ENCODE measurements at regions of chr7 and their contacts with region 1.

Region 1: DNA sequence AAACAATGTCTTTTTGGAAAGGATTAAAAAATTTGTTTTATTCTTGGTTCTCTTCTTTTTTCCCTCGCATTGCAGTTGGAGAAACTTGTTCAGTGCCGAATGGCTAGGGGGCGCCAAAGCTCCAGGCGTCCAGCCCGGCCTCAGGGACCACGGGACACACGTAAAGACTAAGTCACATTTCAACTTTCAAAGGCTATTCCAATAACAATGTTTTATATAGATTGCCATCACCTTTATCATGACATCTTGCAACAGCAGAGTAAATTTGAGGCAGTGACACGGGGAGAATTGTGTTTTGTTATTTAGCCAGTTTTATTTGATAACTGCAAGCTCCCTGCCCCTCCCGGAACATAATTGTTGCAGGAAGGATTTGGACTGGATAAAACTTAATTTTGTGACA is 2.2 kb upstream of the IGFBP3 start:
- DNase-seq: peak; percentile 85

Region 2: DNA sequence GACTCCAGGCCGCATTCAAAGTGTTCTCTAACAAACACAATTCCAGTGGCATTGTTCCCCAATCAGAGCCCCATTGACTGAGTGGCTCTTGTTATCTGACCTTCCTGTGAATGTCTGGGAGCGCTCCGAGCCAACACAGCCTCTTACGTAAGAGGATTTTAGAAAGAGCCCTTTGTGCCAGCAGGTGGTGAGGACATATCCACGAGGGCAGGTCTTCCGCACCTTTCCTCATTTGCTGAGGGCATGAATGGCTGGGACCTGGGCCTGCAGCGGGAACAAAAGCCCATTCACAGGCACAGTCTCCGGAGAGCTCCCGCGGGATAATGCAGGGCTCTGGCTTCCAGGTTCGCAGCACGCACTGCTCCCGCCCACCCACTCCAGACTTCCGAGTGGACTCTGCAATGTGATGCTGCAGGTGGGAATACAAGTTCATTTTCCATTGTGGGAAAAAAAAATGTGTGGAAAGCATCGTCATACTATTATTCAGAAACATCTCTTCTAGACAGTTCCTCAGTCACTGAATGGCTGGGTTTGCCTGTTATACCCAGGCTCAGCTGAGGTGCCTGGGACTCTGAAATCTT is 292.8 kb after region 1 on chr7:
- intact Hi-C with region 1: loop called (anchors 10 kb)
- DNase-seq: no peak

Region 3: GRCh38 chr7:46603780-46604179 is 680.5 kb after region 1 on chr7:
- intact Hi-C with region 1: loop called (anchors 10 kb)
- DNase-seq: peak; percentile 90

Region 4: GRCh38 chr7:46776790-46777189 is 853.5 kb after region 1 on chr7:
- intact Hi-C with region 1: loop called (anchors 10 kb)
- DNase-seq: no peak

Region 5: DNA sequence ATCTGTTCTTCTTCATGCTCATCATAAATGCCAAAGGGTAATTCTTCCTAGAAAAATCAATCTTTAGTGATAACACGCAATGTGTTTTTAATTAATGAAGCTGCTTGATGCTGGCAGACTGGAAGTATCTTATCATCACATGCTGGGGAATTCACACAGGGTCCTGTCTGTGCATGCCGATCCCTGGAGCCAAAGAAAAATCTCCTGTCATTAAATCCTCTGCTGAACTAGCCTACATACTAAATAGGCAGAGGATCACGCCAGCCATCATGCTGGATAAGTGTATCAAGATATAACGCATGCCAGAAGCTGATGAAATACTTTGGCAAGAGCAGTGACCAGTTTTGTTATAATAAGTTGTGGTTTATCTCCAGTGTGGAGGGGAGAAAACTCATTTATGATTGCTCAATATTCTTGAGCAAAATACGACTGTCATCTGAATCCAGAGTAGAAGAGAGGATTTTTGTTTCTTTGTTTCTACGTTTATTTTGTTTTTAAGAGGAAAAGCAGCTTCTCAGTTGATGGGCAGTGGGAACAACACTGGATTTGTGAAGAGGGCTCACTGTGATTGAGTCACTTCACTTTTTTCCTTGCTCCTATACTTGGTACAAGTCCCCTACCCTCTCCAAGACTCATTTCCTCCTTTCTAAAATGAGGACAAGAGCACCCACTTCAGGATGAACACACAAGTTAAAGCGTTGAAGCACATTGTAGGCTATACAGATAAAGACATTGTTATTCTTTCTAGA is 1009.6 kb after region 1 on chr7:
- intact Hi-C with region 1: loop called (anchors 10 kb)
- DNase-seq: no peak

Region 6: DNA sequence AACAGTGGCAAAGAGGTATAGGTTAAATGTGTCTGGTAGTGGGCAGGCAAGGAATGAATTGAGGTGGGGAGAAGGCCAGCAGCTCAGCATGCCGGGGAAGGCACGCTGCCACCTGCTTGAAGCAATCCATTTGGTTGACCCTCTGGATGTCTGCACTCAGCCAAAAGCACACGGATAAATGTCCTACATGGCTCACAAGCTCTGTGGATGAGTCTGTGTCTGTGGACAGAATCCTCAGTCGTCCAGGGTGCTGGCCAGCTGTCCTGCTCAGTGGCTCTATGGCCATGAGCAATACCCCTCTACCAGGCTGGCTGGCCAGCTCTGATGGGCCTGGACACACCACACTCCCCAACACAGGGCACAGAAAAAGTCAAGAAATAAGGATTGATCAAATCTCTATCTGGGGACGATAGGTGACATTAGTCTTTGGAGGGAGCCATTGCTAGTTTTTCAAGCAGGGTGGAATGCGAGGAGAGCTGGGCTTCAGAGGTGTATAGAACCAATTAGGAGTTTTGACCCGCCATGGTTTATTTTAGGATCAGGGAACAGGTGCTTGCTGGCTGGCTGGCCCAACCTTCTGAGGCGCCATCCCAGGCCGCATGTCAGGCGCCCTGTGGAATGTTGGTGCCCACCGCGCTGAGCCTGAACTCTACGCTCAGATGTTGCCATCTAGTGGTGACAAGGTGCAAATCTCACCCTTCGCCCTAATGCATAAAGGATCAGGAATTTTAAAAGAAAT is 1165.2 kb after region 1 on chr7:
- intact Hi-C with region 1: loop called (anchors 2 kb)
- DNase-seq: no peak

Region 7: GRCh38 chr7:47179812-47180515 is 1256.7 kb after region 1 on chr7:
- intact Hi-C with region 1: loop called (anchors 1 kb)
- DNase-seq: no peak

Measured in cardiac septum (tissue), 1 donor.